ENCODE measurements at regions of chr12 and their contacts with region 1.

Region 1: DNA sequence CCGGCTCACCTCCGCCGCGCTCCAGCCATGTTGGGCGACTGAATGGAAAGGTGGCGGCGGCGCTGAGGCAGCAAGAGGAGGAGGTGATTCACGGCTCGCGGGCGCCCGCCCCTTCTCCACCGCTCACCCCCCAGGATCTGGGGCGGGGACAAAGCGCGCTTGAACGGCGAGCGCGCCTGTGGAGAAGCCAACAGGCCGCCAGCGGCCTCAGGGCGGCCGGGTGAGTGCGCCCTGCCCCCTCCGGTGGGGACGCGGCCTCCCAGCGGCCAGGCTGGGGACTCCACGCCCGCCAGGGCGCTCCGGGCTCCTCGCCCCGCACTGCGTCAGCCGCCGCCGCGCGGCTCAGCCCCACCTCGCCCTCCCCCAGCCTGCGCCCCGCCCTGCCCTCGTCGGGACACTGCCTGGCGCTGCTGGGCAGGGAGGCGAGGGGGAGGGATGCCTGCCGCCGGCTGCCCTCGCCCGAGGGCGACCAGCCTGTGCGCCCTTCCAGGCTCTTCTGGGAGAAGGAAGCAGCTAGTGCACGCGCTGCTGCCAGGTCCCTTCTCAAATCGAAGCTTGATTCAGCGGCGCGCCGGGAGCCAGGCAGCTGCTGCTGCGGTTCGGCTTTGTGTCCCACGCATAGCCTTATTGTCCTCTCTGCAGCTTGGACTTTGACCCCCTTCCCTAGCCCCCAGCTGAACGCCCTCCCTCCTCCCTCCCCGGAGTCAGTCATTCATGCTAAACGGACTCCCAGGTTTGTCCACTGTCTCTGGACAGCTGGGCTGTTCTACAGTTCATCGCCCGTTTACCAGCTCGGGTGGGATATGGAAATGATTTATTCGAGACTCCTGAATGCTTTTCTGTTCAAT is at the start of gene KIF21A:
- DNase-seq: peak; percentile 66
- ATAC-seq: peak; percentile 93
- H3K4me3 ChIP-seq: peak within 1 kb of the TSS; percentile 99
- H3K27ac ChIP-seq: peak within 1 kb of the TSS; percentile 51
- H3K4me1 ChIP-seq: no peaks in the 10 kb centered on the region; the same call in 1 of the 2 replicates
- H3K27me3 ChIP-seq: no peaks in the 10 kb centered on the region
- CTCF ChIP-seq: peak; percentile 48 to 68 (median 57); a peak in 5 of 6 replicates
- EP300 ChIP-seq: peak in 1 of 2 experiments; percentile 8; a peak in 1 of 4 replicates
- POLR2A ChIP-seq: peak; percentile 99
- RAD21 ChIP-seq: peak; percentile 50; the same call in 1 of the 2 replicates
- polyA plus RNA-seq, gene KIF21A: 21.3 to 24.6 TPM

Region 2: GRCh38 chr12:38892090-38892786 is 551.1 kb before region 1 on chr12:
- CTCF ChIA-PET with region 1: no interaction called
- POLR2A ChIA-PET with region 1: no interaction called
- RAD21 ChIA-PET with region 1: no interaction called
- SMC1A ChIA-PET with region 1: no interaction called
- in situ Hi-C with region 1: loop called (anchors 25 kb)
- intact Hi-C with region 1: no loop called
- DNase-seq: no peak
- ATAC-seq: peak; percentile 84
- H3K4me3 ChIP-seq: no peak overlapping the region
- H3K27ac ChIP-seq: peak overlapping the region; percentile 5; the same call in 1 of the 2 replicates
- H3K4me1 ChIP-seq: no peaks in the 10 kb centered on the region
- H3K27me3 ChIP-seq: no peaks in the 10 kb centered on the region
- CTCF ChIP-seq: no peak
- EP300 ChIP-seq: no peak
- POLR2A ChIP-seq: no peak
- RAD21 ChIP-seq: no peak

Region 3: DNA sequence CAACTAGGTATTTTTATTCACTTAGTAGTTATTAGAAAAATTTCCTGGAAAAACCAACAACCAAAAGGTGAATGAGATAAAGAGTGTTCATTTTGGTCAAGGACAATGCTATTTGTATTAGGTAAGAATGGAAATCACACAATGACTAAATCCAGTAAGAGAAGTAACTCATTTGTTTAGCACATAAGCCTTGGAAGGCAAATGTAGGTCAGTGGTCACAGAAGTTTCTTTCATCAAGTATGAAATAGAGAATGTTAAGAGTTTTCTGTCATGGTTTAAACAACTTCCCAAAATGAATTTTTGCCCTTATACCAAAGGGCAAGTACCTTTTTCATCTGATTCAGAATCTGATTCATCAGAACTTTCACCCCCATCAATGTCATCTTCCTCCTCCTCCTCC is 102.1 kb before region 1 on chr12:
- CTCF ChIA-PET with region 1: no interaction called
- POLR2A ChIA-PET with region 1: no interaction called
- RAD21 ChIA-PET with region 1: interaction called, 4 read pairs
- SMC1A ChIA-PET with region 1: interaction called, 5 read pairs
- in situ Hi-C with region 1: loop called (anchors 25 kb)
- intact Hi-C with region 1: no loop called
- DNase-seq: peak; percentile 20
- ATAC-seq: peak; percentile 82
- H3K4me3 ChIP-seq: no peak overlapping the region
- H3K27ac ChIP-seq: peak overlapping the region; percentile 35; the same call in 1 of the 2 replicates
- H3K4me1 ChIP-seq: peaks cover 5% of the 10 kb centered on the region; the same call in 1 of the 2 replicates
- H3K27me3 ChIP-seq: no peaks in the 10 kb centered on the region
- CTCF ChIP-seq: no peak
- EP300 ChIP-seq: peak in 1 of 2 experiments; percentile 63; a peak in 1 of 4 replicates
- POLR2A ChIP-seq: no peak
- RAD21 ChIP-seq: no peak

Region 4: DNA sequence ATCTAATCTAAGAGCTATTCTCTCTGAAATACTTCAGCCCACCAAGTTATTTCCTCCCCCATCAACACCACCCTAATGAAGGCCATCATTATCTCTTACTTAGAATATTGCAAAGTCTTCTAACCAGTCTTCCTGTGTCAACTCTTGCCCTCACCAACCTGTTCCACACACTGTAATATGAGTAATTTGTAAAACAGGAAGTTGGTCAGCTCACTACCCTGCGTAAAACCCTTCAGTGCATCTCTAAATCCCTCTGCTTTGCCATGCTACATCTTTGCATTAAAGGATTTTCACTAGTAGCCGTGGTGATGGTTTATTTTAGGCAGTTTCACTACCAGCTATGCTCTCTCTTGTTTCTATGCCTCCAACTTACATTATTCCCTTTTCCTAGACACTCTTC is 70.4 kb before region 1 on chr12:
- CTCF ChIA-PET with region 1: interaction called, 5 read pairs
- POLR2A ChIA-PET with region 1: interaction called, 4 read pairs
- RAD21 ChIA-PET with region 1: interaction called, 8 read pairs
- SMC1A ChIA-PET with region 1: interaction called, 11 read pairs
- in situ Hi-C with region 1: no loop called
- intact Hi-C with region 1: loop called (anchors 5 kb)
- DNase-seq: peak; percentile 61
- ATAC-seq: peak; percentile 96
- H3K4me3 ChIP-seq: no peak overlapping the region
- H3K27ac ChIP-seq: peak overlapping the region; percentile 50
- H3K4me1 ChIP-seq: peaks cover 27% of the 10 kb centered on the region
- H3K27me3 ChIP-seq: no peaks in the 10 kb centered on the region
- CTCF ChIP-seq: no peak
- EP300 ChIP-seq: 0 out of 4 replicates have a peak, but pooled peaks of 1 of the 2 experiments have one; percentile 8
- POLR2A ChIP-seq: no peak
- RAD21 ChIP-seq: no peak

Region 5: DNA sequence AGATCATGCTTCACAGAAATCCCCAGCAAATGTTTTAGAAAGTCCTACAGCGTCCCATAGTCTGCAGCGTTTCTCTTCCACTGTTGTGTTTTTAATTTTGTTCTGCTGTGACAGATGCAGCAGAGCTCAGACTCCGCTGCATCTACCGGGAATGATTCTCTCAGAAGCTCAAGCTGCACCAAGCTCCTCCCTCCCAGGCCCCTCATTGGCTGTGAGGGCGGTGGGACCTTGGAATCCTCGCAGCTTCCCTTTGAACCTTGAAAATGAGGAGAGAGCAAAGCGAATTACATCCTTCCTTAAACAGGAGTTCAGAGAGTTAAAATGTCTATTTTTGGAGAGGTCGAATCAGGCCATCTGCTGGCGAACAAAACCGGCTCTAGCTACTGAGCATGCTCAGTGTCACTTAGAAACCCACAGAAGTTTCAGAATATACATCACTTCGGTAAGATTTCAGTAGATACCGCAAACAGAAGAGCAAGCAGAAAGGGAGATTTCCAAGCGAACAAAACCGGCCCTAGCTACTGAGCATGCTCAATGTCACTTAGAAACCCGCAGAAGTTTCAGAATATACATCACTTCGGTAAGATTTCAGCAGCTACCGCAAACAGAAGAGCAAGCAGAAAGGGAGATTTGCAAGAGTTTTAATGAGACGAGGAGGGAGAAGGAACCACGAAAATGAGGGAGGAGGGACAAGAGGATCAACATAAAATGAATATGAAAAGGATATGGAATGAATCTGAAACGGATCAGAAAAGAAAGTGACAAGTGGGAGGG is 176.5 kb after region 1 on chr12 and contains the start of gene ABCD2:
- CTCF ChIA-PET with region 1: interaction called, 6 read pairs
- POLR2A ChIA-PET with region 1: no interaction called
- RAD21 ChIA-PET with region 1: interaction called, 6 read pairs
- SMC1A ChIA-PET with region 1: interaction called, 10 read pairs
- in situ Hi-C with region 1: no loop called
- intact Hi-C with region 1: loop called (anchors 2 kb)
- DNase-seq: peak; percentile 97
- ATAC-seq: peak; percentile 62
- H3K4me3 ChIP-seq: peak within 1 kb of the TSS; percentile 95
- H3K27ac ChIP-seq: peak within 1 kb of the TSS; percentile 98
- H3K4me1 ChIP-seq: peaks cover 16% of the 10 kb centered on the region
- H3K27me3 ChIP-seq: no peaks in the 10 kb centered on the region
- CTCF ChIP-seq: peak; percentile 3 to 30 (median 21); a peak in 2 of 6 replicates
- EP300 ChIP-seq: peak; percentile 32 to 86; a peak in 3 of 4 replicates
- POLR2A ChIP-seq: peak; percentile 62
- RAD21 ChIP-seq: no peak
- polyA plus RNA-seq, gene ABCD2: 4.4 to 5.7 TPM

Region 6: DNA sequence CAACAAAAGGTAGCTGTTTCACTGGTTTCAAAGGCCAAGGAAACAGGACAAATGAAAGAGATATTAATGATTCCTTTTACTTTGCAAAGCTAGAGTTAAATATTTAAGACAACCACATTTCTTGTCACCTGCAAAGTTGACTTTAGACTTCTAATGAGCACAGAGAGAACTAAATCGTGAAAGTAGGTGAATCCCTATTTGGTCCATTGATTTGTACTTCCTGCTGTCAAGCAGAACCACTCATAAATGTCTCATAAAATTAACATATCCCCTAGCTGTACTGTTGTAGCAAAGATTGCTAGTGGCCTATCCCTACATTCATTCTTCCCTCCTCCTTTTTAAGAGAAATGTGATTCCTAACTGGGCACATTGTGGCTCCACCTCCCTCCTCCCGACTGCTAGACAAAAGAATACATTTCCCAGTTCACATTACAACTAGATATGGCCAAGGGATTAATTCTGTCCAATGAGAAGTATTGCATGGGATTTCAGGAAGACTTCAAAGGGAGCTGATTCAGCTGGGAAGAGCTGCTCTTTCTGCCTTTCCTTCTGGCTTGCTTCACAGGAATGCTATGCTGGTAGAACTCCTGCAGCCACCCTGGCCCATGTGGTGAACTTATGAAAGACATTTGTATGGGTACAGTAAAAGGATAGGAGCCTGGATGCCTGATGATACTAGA is 403.8 kb after region 1 on chr12:
- CTCF ChIA-PET with region 1: no interaction called
- POLR2A ChIA-PET with region 1: no interaction called
- RAD21 ChIA-PET with region 1: no interaction called
- SMC1A ChIA-PET with region 1: no interaction called
- in situ Hi-C with region 1: no loop called
- intact Hi-C with region 1: no loop called
- DNase-seq: no peak
- ATAC-seq: peak; percentile 67
- H3K4me3 ChIP-seq: no peak overlapping the region
- H3K27ac ChIP-seq: no peak overlapping the region
- H3K4me1 ChIP-seq: no peaks in the 10 kb centered on the region
- H3K27me3 ChIP-seq: no peaks in the 10 kb centered on the region
- CTCF ChIP-seq: no peak
- EP300 ChIP-seq: no peak
- POLR2A ChIP-seq: no peak
- RAD21 ChIP-seq: no peak

Measured in GM12878 (cell line).